ENCODE measurements at regions of chrX and their contacts with region 1.

Region 1: GRCh38 chrX:19372170-19372546 is 28.4 kb downstream of the PDHA1 start:
- DNase-seq: peak; percentile 67
- H3K4me3 ChIP-seq: peak overlapping the region; percentile 25
- H3K27ac ChIP-seq: no peak overlapping the region
- H3K4me1 ChIP-seq: no peaks in the 10 kb centered on the region
- H3K27me3 ChIP-seq: no peaks in the 10 kb centered on the region
- CTCF ChIP-seq: peak; percentile 59

Region 2: GRCh38 chrX:19532709-19533108 is 160.6 kb after region 1 on chrX:
- intact Hi-C with region 1: loop called (anchors 5 kb)
- DNase-seq: no peak
- H3K4me3 ChIP-seq: no peak overlapping the region
- H3K27ac ChIP-seq: no peak overlapping the region
- H3K4me1 ChIP-seq: no peaks in the 10 kb centered on the region
- H3K27me3 ChIP-seq: no peaks in the 10 kb centered on the region
- CTCF ChIP-seq: no peak

Region 3: DNA sequence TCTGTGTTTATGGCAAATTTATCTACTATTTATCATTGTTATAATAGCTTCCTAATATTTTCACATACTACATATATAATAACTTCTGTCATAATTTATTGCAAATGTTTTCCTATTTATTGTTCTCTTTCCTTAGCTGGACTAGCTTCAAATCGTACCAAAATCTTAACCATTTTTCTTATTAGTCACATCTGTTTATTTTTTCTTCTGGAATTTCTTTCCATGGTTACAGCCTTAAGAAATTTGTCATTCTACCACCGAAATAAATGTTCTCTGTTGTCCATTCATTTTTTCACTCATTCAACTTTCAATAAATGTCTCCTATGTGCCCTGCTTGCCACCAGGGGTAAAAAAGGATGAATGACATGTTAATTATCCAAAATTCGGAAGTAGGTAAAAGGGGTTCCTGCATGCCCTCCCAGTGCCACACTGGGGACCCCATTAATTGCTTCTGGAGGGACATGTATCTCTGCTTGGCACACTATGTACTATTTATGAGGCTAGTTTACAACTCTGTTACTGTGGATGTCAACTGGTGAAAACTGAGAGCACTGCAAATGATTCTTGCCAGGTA is 333.1 kb after region 1 on chrX:
- intact Hi-C with region 1: no loop called
- DNase-seq: no peak
- H3K4me3 ChIP-seq: no peak overlapping the region
- H3K27ac ChIP-seq: no peak overlapping the region
- H3K4me1 ChIP-seq: no peaks in the 10 kb centered on the region
- H3K27me3 ChIP-seq: no peaks in the 10 kb centered on the region
- CTCF ChIP-seq: no peak

Region 4: GRCh38 chrX:19739683-19740082 is 367.5 kb after region 1 on chrX:
- intact Hi-C with region 1: loop called (anchors 5 kb)
- DNase-seq: peak; percentile 70
- H3K4me3 ChIP-seq: no peak overlapping the region
- H3K27ac ChIP-seq: no peak overlapping the region
- H3K4me1 ChIP-seq: no peaks in the 10 kb centered on the region
- H3K27me3 ChIP-seq: no peaks in the 10 kb centered on the region
- CTCF ChIP-seq: peak; percentile 53

Measured in colonic mucosa (tissue), 4 donors.